ENCODE measurements at regions of chr9 and their contacts with region 1.

Region 1: DNA sequence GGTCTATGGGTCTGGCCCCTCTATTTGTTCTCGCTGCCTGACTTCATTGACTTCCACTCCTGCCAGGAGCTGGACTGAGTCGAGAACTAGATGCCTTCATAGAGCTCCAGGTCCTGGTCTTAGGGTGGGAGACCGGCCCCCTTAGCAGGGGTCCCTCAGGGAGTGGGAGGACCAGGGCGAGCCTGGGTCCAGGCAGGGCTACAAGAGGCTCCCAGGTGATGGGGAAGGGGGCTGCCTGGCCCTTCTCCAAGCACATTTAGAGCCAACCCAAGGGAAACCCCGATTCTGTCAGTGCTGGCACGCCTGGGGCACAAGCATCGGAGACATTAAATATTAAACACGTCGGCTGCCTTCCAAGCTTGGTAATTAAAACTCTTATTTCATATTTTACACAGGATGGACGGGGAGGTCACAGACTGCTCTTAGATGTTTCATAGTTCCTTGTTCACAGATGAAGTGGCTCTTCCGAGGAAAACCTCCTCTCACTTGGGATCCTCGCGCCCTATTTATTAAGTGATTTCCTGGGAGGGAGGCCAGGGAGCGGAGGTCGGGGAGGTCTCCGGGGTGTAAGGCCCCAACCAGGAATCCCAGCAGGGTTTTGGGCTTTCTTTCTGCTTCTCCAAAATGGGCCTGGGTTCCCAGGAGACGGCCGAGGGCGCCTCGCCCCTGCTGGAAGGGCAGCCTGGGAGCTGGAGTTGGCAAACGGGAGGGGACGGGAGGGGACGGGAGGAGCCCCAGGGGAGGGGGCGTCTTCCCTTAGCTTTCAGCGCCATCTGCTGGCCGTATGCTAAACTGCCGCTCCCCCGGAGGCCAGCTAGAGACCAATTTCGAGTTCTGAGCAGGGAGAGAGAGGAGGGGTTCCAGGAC is 23.4 kb upstream of the ZBTB43 start:
- DNase-seq: peak; percentile 89
- ATAC-seq: peak; percentile 78

Region 2: GRCh38 chr9:126704873-126705766 is 76.3 kb before region 1 on chr9:
- intact Hi-C with region 1: loop called (anchors 5 kb)
- DNase-seq: peak; percentile 86
- ATAC-seq: peak; percentile 81

Region 3: DNA sequence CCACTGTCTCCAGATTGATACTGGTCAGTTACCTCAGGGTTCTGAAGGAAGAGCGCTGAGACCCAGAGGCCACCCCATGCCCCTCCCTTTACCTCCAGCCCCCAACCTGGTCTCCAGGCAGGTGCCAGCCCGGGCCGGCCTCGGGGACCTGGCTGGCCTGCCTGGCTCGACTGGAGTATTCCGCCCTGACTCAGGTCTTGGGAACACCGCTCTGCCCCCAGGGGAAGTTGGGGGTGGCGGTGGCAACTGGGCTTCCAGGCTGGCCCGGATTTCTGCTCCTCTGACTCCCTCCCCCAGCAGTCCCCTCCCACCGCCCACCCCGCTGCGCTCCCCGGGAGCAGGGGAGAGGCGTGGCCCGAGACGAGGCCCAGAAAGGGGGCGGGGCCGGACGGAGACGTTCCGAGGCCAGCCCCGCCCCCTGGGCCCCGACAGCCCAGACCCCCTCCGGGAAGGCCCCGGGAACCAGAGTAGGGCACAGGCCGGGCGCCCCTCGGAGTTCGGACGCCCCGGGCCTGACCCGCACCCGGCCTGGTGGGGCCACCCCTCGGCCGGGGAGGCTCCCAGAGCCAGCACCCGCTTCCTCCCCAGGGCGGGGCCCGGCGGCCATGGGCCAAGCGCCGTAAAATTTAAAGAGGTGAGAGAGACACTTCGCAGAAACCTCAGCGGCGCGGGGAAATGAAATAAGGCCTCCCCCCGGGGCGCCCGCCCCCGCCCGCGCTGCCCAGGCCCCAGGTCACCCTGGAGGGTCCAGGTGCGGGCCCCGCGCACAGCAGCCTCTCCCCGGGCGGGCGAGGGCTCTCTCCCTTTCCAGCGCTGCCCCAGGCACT is 59.0 kb before region 1 on chr9:
- intact Hi-C with region 1: no loop called
- DNase-seq: peak; percentile 88
- ATAC-seq: peak; percentile 92